ENCODE measurements at regions of chr1 and their contacts with region 1.

Region 1: DNA sequence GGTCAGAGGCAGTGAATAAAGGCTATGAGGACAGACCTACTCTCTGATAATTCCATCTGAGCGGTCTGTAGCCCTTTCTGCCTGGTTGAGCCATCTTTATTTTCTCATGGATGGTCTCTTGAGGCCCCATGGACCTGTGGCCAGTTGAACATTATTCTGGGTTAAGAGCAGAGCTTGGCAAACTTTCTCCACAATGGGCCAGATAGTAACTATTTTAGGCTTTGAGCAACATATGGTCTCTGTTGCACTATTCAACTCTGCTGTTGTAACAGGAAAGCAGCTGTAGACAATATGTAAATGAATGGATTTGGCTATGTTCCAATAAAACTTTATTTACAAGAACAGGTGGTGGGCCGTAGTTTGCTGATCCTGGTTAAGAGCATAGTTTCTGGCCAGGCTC is 62.7 kb downstream of the KAZN start:
- DNase-seq: no peak
- H3K4me3 ChIP-seq: no peak overlapping the region
- H3K27ac ChIP-seq: peak overlapping the region in 1 of 2 donors; percentile 67
- H3K4me1 ChIP-seq: no peaks in the 10 kb centered on the region
- H3K27me3 ChIP-seq: no peaks in the 10 kb centered on the region
- CTCF ChIP-seq: no peak
- POLR2A ChIP-seq: no peak

Region 2: DNA sequence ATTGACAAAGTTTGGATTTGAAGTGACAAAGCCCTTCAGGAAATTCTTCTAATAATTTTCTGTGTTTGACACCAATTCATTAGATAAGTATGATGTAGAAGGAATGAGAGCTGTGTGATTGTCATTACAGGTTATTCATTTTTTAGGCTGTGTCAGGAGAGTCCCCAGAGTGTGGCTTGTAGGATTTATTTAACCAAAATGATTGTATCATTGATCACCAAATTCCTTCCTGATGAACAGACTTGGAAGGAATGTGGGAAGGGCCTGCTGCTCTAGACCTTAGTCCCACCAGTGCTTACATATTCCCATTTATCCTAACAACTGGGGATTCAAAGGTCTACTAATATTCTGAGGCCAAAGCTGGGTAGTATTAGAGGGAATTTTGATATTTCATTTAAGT is 446.1 kb before region 1 on chr1:
- intact Hi-C with region 1: loop called (anchors 5 kb)
- DNase-seq: no peak
- H3K4me3 ChIP-seq: no peak overlapping the region
- H3K27ac ChIP-seq: no peak overlapping the region
- H3K4me1 ChIP-seq: no peaks in the 10 kb centered on the region
- H3K27me3 ChIP-seq: no peaks in the 10 kb centered on the region
- CTCF ChIP-seq: no peak
- POLR2A ChIP-seq: no peak

Region 3: GRCh38 chr1:14826172-14826636 is 165.0 kb after region 1 on chr1:
- intact Hi-C with region 1: no loop called
- DNase-seq: peak in 1 of 2 donors; percentile 39
- H3K4me3 ChIP-seq: no peak overlapping the region
- H3K27ac ChIP-seq: peak overlapping the region; percentile 73 to 91
- H3K4me1 ChIP-seq: no peaks in the 10 kb centered on the region
- H3K27me3 ChIP-seq: no peaks in the 10 kb centered on the region
- CTCF ChIP-seq: no peak
- POLR2A ChIP-seq: no peak

Measured in breast epithelium (tissue), 4 donors.